ENCODE measurements at regions of chr4 and their contacts with region 1.

Region 1: DNA sequence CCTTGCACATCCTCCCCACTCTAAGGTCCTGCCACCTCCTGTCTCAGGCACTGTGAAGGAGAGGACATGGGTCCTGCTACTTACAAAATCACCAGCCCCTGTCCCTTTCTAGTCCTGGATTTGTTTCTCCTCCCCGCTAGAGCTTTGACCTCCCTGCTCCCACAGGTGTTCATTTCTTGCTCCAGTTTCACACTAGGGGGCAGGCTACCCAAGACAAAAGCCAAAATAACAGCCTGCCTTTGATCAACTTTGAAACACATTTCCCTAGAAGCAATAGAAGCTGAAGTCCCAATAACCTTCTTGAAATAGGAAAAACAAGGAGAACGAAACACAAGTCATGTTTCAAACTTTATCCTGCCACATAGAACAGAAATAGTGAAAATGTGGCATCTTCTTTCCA is 164.4 kb downstream of the QDPR start:
- DNase-seq: peak; percentile 15 to 46 (median 30)
- ATAC-seq: peak; percentile 77
- H3K4me3 ChIP-seq: no peak overlapping the region
- H3K27ac ChIP-seq: no peak overlapping the region
- H3K4me1 ChIP-seq: no peaks in the 10 kb centered on the region
- H3K27me3 ChIP-seq: no peaks in the 10 kb centered on the region
- CTCF ChIP-seq: peak; percentile 55 to 71 (median 67)
- EP300 ChIP-seq: no peak
- POLR2A ChIP-seq: no peak
- RAD21 ChIP-seq: peak; percentile 48 to 68

Region 2: DNA sequence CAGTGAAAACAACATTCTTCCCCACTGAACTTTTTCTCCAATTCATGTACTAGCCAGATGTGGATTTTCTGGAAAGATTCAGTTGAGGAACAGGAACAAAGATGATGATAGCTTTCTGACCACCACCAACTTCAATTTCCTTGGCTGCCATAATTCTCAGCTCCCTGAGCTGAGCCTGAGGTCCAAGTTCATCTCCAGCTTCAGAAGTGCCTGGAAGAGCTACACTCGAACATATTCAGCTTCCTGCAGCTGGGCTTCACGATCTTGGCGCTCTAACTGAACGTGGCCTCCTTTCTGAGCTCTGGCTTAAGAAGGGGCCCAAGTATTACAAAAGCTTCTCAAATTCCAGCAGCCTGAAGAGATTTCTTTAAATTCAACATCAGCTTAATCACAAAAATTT is 80.5 kb after region 1 on chr4:
- CTCF ChIA-PET with region 1: no interaction called
- POLR2A ChIA-PET with region 1: no interaction called
- in situ Hi-C with region 1: no loop called
- intact Hi-C with region 1: no loop called
- DNase-seq: no peak
- ATAC-seq: no peak
- H3K4me3 ChIP-seq: no peak overlapping the region
- H3K27ac ChIP-seq: no peak overlapping the region
- H3K4me1 ChIP-seq: no peaks in the 10 kb centered on the region
- H3K27me3 ChIP-seq: peaks cover 0 to 3% of the 10 kb centered on the region in 2 experiments; a peak in 2 of 5 replicates
- CTCF ChIP-seq: no peak
- EP300 ChIP-seq: no peak
- POLR2A ChIP-seq: no peak
- RAD21 ChIP-seq: no peak

Region 3: DNA sequence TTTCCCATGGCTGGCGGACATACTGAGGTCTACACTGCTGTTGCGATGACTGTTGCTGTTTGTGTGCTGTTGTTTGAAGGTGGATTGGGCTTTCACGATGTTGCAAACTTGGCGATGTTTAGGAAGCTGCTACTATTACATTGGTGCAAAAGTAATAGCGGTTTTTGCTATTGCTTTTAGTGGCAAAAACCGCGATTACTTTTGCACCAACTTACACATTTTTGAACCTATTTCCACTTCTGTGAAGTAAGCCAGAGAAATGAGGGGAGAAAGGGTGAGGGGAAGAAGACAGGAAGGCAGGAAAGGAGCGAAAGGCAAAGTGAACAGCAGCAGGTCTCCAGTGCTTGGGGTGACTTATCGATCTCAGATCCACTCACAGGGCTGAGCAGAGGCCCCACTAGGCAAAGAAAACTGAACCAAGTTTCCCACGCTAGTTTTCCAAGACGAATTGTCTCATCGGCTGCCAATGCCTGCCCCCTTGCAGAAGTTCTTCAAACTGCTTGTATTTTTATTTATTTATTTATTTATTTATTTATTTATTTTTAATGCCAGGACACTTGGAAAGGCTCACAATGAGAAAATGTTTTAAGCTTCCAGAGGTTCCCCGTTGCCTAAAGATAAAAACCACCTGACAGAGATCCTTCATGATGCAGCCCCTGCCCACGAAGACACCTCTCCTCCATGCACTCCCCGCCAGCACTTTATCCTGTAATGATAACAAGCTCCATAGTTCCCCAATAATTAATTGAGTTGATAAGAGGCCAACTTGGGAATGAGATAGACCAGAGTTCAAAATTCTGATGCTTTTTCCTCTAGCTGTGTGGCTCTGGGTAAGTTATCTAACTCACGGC is 121.2 kb after region 1 on chr4:
- CTCF ChIA-PET with region 1: no interaction called
- POLR2A ChIA-PET with region 1: no interaction called
- in situ Hi-C with region 1: loop called (anchors 5 kb)
- intact Hi-C with region 1: loop called (anchors 2 kb)
- DNase-seq: peak; percentile 34 to 60 (median 52)
- ATAC-seq: peak; percentile 42; the same call in 2 of the 3 replicates
- H3K4me3 ChIP-seq: no peak overlapping the region
- H3K27ac ChIP-seq: no peak overlapping the region
- H3K4me1 ChIP-seq: no peaks in the 10 kb centered on the region; a peak in 1 of 5 replicates
- H3K27me3 ChIP-seq: peaks cover 6 to 28% of the 10 kb centered on the region in 2 experiments; a peak in 4 of 5 replicates
- CTCF ChIP-seq: peak; percentile 40 to 61 (median 55); a peak in 5 of 6 replicates
- EP300 ChIP-seq: no peak
- POLR2A ChIP-seq: no peak
- RAD21 ChIP-seq: peak; percentile 12 to 36; a peak in 1 of 4 replicates

Region 4: DNA sequence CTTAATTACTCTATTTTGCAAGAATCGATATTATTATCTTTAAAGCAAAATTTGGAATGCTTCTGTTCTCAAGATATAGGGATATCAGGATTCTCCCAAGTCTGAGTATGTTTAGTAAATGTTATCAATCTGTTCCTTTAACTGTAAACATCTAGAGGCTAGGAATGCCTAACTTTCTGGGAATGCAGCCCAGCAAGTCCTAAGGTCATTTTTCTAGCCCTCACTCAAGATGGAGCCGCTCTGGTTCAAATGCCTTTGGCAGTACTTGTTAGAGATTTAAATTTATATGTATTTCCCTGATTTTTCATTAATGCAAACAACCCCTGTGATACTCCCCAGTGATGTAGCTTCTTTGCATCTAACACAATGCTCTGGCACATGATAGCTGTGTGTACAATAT is 1297.9 kb after region 1 on chr4:
- CTCF ChIA-PET with region 1: no interaction called
- POLR2A ChIA-PET with region 1: no interaction called
- in situ Hi-C with region 1: no loop called
- intact Hi-C with region 1: no loop called
- DNase-seq: no peak
- ATAC-seq: no peak
- H3K4me3 ChIP-seq: no peak overlapping the region
- H3K27ac ChIP-seq: no peak overlapping the region
- H3K4me1 ChIP-seq: no peaks in the 10 kb centered on the region
- H3K27me3 ChIP-seq: no peaks in the 10 kb centered on the region
- CTCF ChIP-seq: no peak
- EP300 ChIP-seq: no peak
- POLR2A ChIP-seq: no peak
- RAD21 ChIP-seq: no peak

Measured in K562 (cell line).